ENCODE measurements at regions of chr4 and their contacts with region 1.

Region 1: GRCh38 chr4:56799824-56800756 is 21.4 kb downstream of the SPINK2 start:
- DNase-seq: peak; percentile 88
- ATAC-seq: peak; percentile 99

Region 2: GRCh38 chr4:56575820-56576429 is 224.2 kb before region 1 on chr4:
- intact Hi-C with region 1: loop called (anchors 5 kb)
- DNase-seq: no peak
- ATAC-seq: no peak

Region 3: GRCh38 chr4:56739066-56739777 is 60.9 kb before region 1 on chr4:
- intact Hi-C with region 1: no loop called
- DNase-seq: no peak
- ATAC-seq: no peak

Measured in left ventricle myocardium superior (tissue), 1 donor.